ENCODE measurements at regions of chr6 and their contacts with region 1.

Region 1: GRCh38 chr6:5025911-5026819 is 22.3 kb upstream of the RPP40 start:
- DNase-seq: peak; percentile 91
- H3K4me3 ChIP-seq: peak overlapping the region; percentile 61 to 66 (median 64)
- H3K27ac ChIP-seq: peak overlapping the region; percentile 87 to 92 (median 88)
- H3K4me1 ChIP-seq: peaks cover 8 to 34% (median 16%) of the 10 kb centered on the region in 4 donors
- H3K27me3 ChIP-seq: no peaks in the 10 kb centered on the region
- CTCF ChIP-seq: peak; percentile 9 to 27 (median 20)
- EP300 ChIP-seq: no peak
- POLR2A ChIP-seq: no peak

Region 2: GRCh38 chr6:4714961-4715501 is 311.1 kb before region 1 on chr6:
- intact Hi-C with region 1: no loop called
- DNase-seq: no peak
- H3K4me3 ChIP-seq: no peak overlapping the region
- H3K27ac ChIP-seq: no peak overlapping the region
- H3K4me1 ChIP-seq: no peaks in the 10 kb centered on the region
- H3K27me3 ChIP-seq: no peaks in the 10 kb centered on the region
- CTCF ChIP-seq: no peak
- EP300 ChIP-seq: no peak
- POLR2A ChIP-seq: no peak

Region 3: DNA sequence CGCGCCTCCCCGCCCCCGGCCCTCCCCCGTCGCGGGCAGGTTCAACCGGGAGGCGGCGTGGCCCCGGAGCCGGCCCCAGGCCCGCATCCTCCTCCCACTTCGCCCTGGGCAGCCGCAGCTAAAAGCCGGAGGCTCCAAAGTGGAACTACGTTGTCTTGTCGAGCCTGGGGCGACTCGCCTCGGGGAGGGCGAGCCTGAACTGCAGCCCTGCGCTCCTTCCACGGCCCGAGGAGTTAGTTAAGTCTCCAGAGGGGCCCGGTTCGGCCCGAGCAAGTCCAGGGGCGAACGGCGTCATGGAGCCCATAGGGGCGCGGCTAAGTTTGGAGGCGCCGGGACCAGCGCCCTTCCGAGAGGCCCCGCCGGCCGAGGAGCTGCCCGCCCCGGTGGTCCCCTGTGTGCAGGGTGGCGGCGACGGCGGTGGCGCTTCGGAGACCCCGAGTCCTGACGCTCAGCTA is 59.1 kb after region 1 on chr6 and contains the start of gene PPP1R3G:
- intact Hi-C with region 1: loop called (anchors 10 kb)
- DNase-seq: no peak
- H3K4me3 ChIP-seq: peak within 1 kb of the TSS; percentile 59 to 82 (median 72)
- H3K27ac ChIP-seq: peak within 1 kb of the TSS; percentile 81 to 89 (median 88)
- H3K4me1 ChIP-seq: peaks cover 18 to 37% (median 25%) of the 10 kb centered on the region in 4 donors
- H3K27me3 ChIP-seq: no peaks in the 10 kb centered on the region
- CTCF ChIP-seq: no peak
- EP300 ChIP-seq: no peak
- POLR2A ChIP-seq: no peak
- total RNA-seq, gene PPP1R3G: 3.0 to 7.9 (median 5.5) TPM

Measured in esophagus muscularis mucosa (tissue), 4 donors.